IMR-90 (cell line): ENCODE measurements at regions of chr20 and their contacts with region 1.

Region 1: DNA sequence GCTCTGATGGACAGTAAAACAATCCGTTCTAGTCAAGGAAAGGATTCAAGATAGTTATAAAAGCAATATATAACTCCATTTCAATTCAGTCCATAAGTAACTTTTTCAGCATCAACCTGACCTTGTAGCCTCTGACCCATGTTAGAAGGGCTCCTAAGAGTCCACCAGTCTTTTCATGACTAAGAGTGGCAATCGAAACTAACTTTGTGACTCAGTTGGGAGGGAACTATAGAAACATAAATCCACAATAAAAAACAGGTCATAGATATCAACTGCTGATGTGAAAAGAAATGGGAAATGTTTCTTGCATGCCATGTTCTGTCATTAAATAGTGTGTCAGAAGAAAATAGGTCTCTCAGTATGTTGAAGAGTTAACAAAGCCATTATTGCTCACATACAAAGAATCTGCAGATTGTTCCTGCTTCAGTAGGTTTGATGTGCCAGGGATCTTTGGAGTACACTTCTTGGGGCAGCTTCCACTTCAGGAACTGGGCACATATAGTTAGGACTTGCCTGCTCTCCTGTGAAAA is 16.2 kb upstream of the RBL1 start:
- DNase-seq: no peak
- ATAC-seq: no peak
- H3K4me3 ChIP-seq: no peak overlapping the region
- H3K27ac ChIP-seq: no peak overlapping the region
- H3K4me1 ChIP-seq: no peaks in the 10 kb centered on the region
- H3K27me3 ChIP-seq: peaks cover 5% of the 10 kb centered on the region; the same call in 1 of the 2 replicates
- CTCF ChIP-seq: no peak
- POLR2A ChIP-seq: no peak
- RAD21 ChIP-seq: no peak

Region 2: GRCh38 chr20:37053230-37053950 is 58.6 kb before region 1 on chr20:
- CTCF ChIA-PET with region 1: no interaction called
- POLR2A ChIA-PET with region 1: no interaction called
- dilution Hi-C with region 1: no loop called
- in situ Hi-C with region 1: no loop called
- intact Hi-C with region 1: no loop called
- DNase-seq: peak; percentile 57
- ATAC-seq: peak; percentile 76
- H3K4me3 ChIP-seq: no peak overlapping the region
- H3K27ac ChIP-seq: peak overlapping the region; percentile 29; the same call in 1 of the 2 replicates
- H3K4me1 ChIP-seq: peaks cover 2% of the 10 kb centered on the region; the same call in 1 of the 2 replicates
- H3K27me3 ChIP-seq: no peaks in the 10 kb centered on the region
- CTCF ChIP-seq: no peak
- POLR2A ChIP-seq: no peak
- RAD21 ChIP-seq: no peak

Region 3: GRCh38 chr20:37123441-37123840 is 11.4 kb after region 1 on chr20:
- CTCF ChIA-PET with region 1: interaction called, 3 read pairs
- POLR2A ChIA-PET with region 1: interaction called, 13 read pairs
- dilution Hi-C with region 1: no loop called
- in situ Hi-C with region 1: no loop called
- intact Hi-C with region 1: no loop called
- DNase-seq: no peak
- ATAC-seq: no peak
- H3K4me3 ChIP-seq: no peak overlapping the region
- H3K27ac ChIP-seq: no peak overlapping the region
- H3K4me1 ChIP-seq: no peaks in the 10 kb centered on the region
- H3K27me3 ChIP-seq: peaks cover 1% of the 10 kb centered on the region; the same call in 1 of the 2 replicates
- CTCF ChIP-seq: no peak
- POLR2A ChIP-seq: no peak
- RAD21 ChIP-seq: no peak

Region 4: DNA sequence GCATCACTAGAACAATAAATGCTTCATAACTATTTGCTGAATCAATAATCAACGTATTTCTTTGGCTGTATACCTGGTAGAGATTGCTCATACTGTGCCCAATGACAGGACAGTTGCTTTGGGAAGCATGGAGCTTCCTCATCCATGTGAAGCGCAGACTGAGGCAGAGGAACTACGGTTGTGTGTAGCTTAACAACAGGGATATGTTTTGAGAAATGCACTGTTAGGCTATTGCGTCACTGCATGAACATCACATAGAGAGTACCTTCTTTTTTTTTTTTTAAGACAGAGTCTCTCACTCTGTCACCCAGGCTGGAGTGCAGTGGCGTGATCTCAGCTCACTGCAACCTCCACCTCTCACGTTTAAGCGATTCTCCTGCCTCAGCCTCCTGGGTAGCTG is 33.0 kb after region 1 on chr20:
- CTCF ChIA-PET with region 1: no interaction called
- POLR2A ChIA-PET with region 1: no interaction called
- dilution Hi-C with region 1: no loop called
- in situ Hi-C with region 1: no loop called
- intact Hi-C with region 1: loop called (anchors 5 kb)
- DNase-seq: peak; percentile 4
- ATAC-seq: 0 out of 2 replicates have a peak, but pooled peaks have one; percentile 11
- H3K4me3 ChIP-seq: no peak overlapping the region
- H3K27ac ChIP-seq: no peak overlapping the region
- H3K4me1 ChIP-seq: no peaks in the 10 kb centered on the region
- H3K27me3 ChIP-seq: no peaks in the 10 kb centered on the region
- CTCF ChIP-seq: no peak
- POLR2A ChIP-seq: no peak
- RAD21 ChIP-seq: no peak

Region 5: GRCh38 chr20:37155987-37156386 is 44.0 kb after region 1 on chr20:
- CTCF ChIA-PET with region 1: no interaction called
- POLR2A ChIA-PET with region 1: no interaction called
- dilution Hi-C with region 1: no loop called
- in situ Hi-C with region 1: no loop called
- intact Hi-C with region 1: no loop called
- DNase-seq: no peak
- ATAC-seq: no peak
- H3K4me3 ChIP-seq: no peak overlapping the region
- H3K27ac ChIP-seq: no peak overlapping the region
- H3K4me1 ChIP-seq: no peaks in the 10 kb centered on the region
- H3K27me3 ChIP-seq: no peaks in the 10 kb centered on the region
- CTCF ChIP-seq: no peak
- POLR2A ChIP-seq: no peak
- RAD21 ChIP-seq: no peak